Activated CD4-positive, alpha-beta T cell treated with anti-CD3 and anti-CD28 coated beads, Interleukin-2, amount 10 ng/mL, durations not matched to agents 24 days and 14 days (primary cell): ENCODE measurements at regions of chr3 and their contacts with region 1.

Region 1: GRCh38 chr3:39267631-39268548 is 11.9 kb downstream of the CX3CR1 start:
- DNase-seq: peak; percentile 94
- H3K4me3 Mint-ChIP-seq: peak overlapping the region; percentile 73
- H3K27ac Mint-ChIP-seq: peak overlapping the region; percentile 98
- H3K4me1 Mint-ChIP-seq: peaks cover 58% of the 10 kb centered on the region
- H3K27me3 Mint-ChIP-seq: peaks cover 3% of the 10 kb centered on the region

Region 2: DNA sequence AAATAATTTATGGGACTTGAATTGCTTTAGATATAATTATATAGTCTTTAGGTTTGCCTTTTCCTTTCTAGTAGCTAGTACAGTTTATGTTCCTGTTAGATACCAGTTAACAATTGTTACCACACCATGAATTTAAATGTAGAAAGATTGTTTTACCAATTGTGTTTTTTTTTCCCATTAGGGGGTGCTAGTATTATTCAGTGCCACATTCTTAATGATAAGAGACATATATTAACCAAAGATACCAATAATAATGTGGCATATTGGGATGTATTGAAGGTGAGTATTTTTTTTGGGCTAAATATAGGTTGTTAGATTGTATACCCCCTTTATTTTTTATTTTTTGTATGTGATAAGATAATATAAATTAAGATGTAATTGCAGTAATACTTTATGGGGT is 188.4 kb before region 1 on chr3:
- intact Hi-C with region 1: no loop called
- DNase-seq: no peak
- H3K4me3 Mint-ChIP-seq: no peak overlapping the region
- H3K27ac Mint-ChIP-seq: no peak overlapping the region
- H3K4me1 Mint-ChIP-seq: peaks cover 30% of the 10 kb centered on the region
- H3K27me3 Mint-ChIP-seq: no peaks in the 10 kb centered on the region

Region 3: GRCh38 chr3:39146984-39147591 is 120.8 kb before region 1 on chr3:
- intact Hi-C with region 1: loop called (anchors 1 kb)
- DNase-seq: peak; percentile 89
- H3K4me3 Mint-ChIP-seq: peak overlapping the region; percentile 96
- H3K27ac Mint-ChIP-seq: peak overlapping the region; percentile 100
- H3K4me1 Mint-ChIP-seq: peaks cover 73% of the 10 kb centered on the region
- H3K27me3 Mint-ChIP-seq: no peaks in the 10 kb centered on the region

Region 4: GRCh38 chr3:39180546-39181346 is 87.1 kb before region 1 on chr3:
- intact Hi-C with region 1: loop called (anchors 5 kb)
- DNase-seq: peak; percentile 97
- H3K4me3 Mint-ChIP-seq: peak overlapping the region; percentile 84
- H3K27ac Mint-ChIP-seq: peak overlapping the region; percentile 69
- H3K4me1 Mint-ChIP-seq: peaks cover 50% of the 10 kb centered on the region
- H3K27me3 Mint-ChIP-seq: no peaks in the 10 kb centered on the region

Region 5: GRCh38 chr3:39220407-39221140 is 47.3 kb before region 1 on chr3:
- intact Hi-C with region 1: loop called (anchors 5 kb)
- DNase-seq: peak; percentile 77
- H3K4me3 Mint-ChIP-seq: peak overlapping the region; percentile 34
- H3K27ac Mint-ChIP-seq: peak overlapping the region; percentile 36
- H3K4me1 Mint-ChIP-seq: peaks cover 41% of the 10 kb centered on the region
- H3K27me3 Mint-ChIP-seq: peaks cover 50% of the 10 kb centered on the region

Region 6: DNA sequence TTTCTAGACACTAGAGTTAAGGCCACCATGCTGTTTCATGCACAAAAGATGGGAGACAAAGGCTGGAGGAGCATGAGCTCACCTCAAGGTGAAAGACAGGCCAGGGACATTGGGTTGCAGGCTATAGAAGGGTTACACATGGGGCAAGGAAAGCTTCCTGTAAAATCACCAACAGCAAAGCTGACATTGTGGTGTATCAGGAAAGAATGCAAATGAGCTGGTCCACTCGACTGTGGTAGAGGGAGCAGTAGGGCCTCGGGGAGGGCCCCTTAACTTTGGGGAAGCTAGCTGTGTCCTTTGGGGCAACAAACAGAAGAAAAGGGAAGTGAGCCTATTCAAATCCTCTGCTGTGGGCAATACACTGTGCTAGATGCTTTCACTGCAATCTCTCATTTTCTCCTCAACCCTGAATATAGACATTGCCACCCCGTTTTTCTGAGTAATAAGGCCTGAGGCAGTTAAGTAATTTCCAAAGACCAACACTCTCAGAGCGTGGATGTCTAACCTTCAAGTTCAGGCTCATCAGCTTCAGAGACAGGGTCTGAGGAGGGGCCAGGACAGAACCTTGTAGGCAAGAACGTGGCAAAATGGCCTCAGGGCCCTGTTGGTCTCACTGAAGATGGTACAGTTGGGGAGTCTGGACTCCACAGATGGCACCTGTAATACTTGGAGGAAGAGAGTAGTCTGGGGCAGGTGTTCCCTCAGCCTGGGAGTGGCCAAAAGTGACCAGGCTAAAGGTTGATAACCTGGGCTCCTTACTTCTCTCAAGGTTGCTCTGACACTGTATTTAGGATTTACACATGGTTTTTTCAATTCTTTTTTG is 12.2 kb before region 1 on chr3:
- intact Hi-C with region 1: loop called (anchors 1 kb)
- DNase-seq: no peak
- H3K4me3 Mint-ChIP-seq: peak overlapping the region; percentile 16
- H3K27ac Mint-ChIP-seq: peak overlapping the region; percentile 80
- H3K4me1 Mint-ChIP-seq: peaks cover 54% of the 10 kb centered on the region
- H3K27me3 Mint-ChIP-seq: peaks cover 8% of the 10 kb centered on the region